ENCODE measurements at regions of chr2 and their contacts with region 1.

Region 1: DNA sequence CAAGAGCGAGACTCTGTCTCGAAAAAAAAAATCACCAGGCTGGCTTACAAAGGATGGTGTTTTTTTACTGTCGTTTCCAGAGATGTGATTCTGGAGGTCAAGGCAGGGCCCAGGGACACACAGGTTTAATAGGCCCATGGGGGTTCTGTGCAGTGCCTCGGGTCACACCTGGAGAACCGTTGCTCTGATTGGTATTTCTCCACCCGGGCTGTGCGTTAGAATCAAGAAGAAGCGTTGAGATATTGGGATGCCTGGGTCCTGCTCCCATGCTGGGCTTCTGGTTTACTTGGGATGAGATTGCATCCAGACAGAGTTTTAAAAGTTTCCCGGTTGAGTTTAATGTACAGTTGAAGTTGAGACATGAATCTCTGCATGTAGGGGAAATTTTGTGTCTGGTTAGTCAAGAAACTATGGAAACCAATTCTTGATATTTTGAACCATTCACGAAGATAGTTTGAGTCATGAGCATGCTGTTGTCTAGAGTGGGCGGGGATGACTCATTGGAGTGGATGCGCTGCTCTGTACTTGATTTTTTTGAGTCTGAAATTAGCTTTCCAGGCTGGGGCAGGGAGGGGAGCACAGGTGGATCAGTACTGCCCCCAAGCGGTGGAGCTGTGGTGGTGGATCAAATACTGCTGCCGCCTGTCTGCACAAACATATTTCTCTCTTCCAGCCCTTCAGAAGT is 50.1 kb downstream of the GREB1 start:
- DNase-seq: peak; percentile 82
- ATAC-seq: peak; percentile 89
- H3K4me3 Mint-ChIP-seq: no peak overlapping the region
- H3K27ac Mint-ChIP-seq: no peak overlapping the region
- H3K4me1 Mint-ChIP-seq: peaks cover 7% of the 10 kb centered on the region
- H3K27me3 Mint-ChIP-seq: peaks cover 6% of the 10 kb centered on the region

Region 2: GRCh38 chr2:11270891-11271290 is 313.1 kb before region 1 on chr2:
- CTCF ChIA-PET with region 1: no interaction called
- DNase-seq: no peak
- ATAC-seq: no peak
- H3K4me3 Mint-ChIP-seq: no peak overlapping the region
- H3K27ac Mint-ChIP-seq: no peak overlapping the region
- H3K4me1 Mint-ChIP-seq: peaks cover 5% of the 10 kb centered on the region
- H3K27me3 Mint-ChIP-seq: no peaks in the 10 kb centered on the region

Region 3: GRCh38 chr2:11465497-11466406 is 118.2 kb before region 1 on chr2 and contains the start of gene E2F6:
- CTCF ChIA-PET with region 1: interaction called, 16 read pairs
- DNase-seq: peak; percentile 85
- ATAC-seq: peak; percentile 93
- H3K4me3 Mint-ChIP-seq: peak within 1 kb of the TSS; percentile 93
- H3K27ac Mint-ChIP-seq: peak within 1 kb of the TSS; percentile 82
- H3K4me1 Mint-ChIP-seq: peaks cover 27% of the 10 kb centered on the region
- H3K27me3 Mint-ChIP-seq: no peaks in the 10 kb centered on the region
- total RNA-seq, gene E2F6: 7.5 to 11.8 TPM

Region 4: GRCh38 chr2:11477994-11478393 is 106.0 kb before region 1 on chr2:
- CTCF ChIA-PET with region 1: interaction called, 186 read pairs
- DNase-seq: peak; percentile 89
- ATAC-seq: peak; percentile 78
- H3K4me3 Mint-ChIP-seq: no peak overlapping the region
- H3K27ac Mint-ChIP-seq: no peak overlapping the region
- H3K4me1 Mint-ChIP-seq: peaks cover under 1% of the 10 kb centered on the region
- H3K27me3 Mint-ChIP-seq: peaks cover 27% of the 10 kb centered on the region

Region 5: DNA sequence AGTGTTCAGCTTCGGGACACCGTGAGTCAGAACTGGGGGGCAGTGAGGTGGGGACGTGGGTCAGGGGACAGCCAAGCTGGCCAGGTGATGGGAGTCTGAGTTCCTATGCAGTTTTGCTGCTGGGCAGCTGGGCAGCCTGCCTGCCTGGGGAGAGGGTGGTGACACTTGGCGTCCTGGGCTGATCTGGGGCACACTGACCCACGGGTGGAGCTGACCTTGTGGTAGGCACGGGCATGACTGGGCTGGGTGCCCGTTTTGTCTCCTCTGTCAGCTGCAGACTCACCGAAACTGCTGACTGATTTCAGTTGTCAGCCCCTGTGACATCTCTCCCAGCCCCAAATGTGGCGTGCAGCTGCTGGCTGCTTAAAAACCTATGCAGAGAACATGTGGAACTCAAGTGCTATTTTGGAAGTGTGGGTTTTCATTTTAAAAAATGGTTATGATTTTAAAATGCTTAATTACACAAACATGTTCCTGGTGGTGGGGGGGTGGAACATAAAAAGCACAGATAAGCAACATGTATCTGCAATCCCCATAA is 85.4 kb before region 1 on chr2:
- CTCF ChIA-PET with region 1: interaction called, 27 read pairs
- DNase-seq: peak; percentile 71
- ATAC-seq: peak; percentile 75
- H3K4me3 Mint-ChIP-seq: no peak overlapping the region
- H3K27ac Mint-ChIP-seq: no peak overlapping the region
- H3K4me1 Mint-ChIP-seq: peaks cover 32% of the 10 kb centered on the region
- H3K27me3 Mint-ChIP-seq: no peaks in the 10 kb centered on the region

Region 6: GRCh38 chr2:11621410-11621809 is 37.4 kb after region 1 on chr2:
- CTCF ChIA-PET with region 1: no interaction called
- DNase-seq: no peak
- ATAC-seq: no peak
- H3K4me3 Mint-ChIP-seq: no peak overlapping the region
- H3K27ac Mint-ChIP-seq: no peak overlapping the region
- H3K4me1 Mint-ChIP-seq: no peaks in the 10 kb centered on the region
- H3K27me3 Mint-ChIP-seq: no peaks in the 10 kb centered on the region